IMR-90 (cell line): ENCODE measurements at regions of chr18 and their contacts with region 1.

Region 1: DNA sequence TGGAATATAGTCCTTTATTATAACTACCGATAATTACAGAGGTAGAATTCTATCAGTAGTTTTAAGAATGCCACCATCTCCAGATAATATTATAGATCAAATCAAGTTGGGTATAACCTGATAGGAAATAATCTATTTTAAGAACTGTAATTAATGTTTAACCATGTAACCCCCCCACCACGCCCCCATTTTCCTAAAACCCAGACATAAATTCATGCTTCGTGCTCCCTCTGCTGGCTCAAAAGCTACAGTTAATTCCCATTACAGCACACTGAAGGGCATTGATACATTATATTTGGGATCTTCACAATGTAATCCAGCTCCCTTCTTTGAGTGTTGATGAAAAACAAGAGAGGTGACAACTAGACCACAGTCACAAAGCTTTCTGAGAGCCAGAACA is 228.0 kb upstream of the SMAD7 start:
- DNase-seq: peak; percentile 23
- ATAC-seq: no peak
- H3K4me3 ChIP-seq: no peak overlapping the region
- H3K27ac ChIP-seq: no peak overlapping the region
- H3K4me1 ChIP-seq: peaks cover 5% of the 10 kb centered on the region; the same call in 1 of the 2 replicates
- H3K27me3 ChIP-seq: no peaks in the 10 kb centered on the region
- CTCF ChIP-seq: peak; percentile 56
- POLR2A ChIP-seq: no peak
- RAD21 ChIP-seq: peak; percentile 68

Region 2: DNA sequence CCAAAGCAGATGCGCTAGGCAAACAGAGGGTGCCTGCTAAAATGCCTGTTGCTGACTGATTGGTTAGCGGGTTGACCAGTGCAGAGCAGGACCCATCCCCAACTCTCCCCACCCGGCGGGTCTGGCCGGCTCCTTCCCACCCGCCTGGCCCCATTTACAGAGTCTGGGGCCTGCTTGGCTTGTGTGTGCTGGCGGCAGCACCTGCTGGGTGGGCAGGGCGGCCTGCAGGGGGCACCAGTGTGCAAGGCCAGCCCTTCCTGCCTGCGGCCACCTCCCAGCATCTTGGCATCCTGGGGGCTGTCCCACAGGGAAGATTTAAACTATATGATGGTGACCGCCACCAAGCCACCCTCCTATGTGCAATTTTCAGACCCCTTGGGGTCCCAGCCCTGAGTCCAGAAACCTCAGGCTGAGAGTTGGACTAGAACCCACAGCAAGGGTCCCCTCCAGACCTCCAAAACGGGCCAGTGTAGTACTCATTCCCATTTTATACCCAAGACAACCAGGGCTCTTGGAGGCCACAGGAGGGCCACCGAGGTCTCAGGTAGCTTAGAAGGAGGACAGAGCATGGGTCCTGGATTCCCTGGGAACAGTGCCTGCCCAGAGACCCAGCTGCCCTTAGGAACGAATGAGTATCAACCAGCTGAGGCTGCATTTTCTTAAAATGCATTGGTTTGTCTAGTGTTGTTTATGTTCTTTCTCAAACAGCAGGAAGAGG is 401.6 kb before region 1 on chr18:
- CTCF ChIA-PET with region 1: no interaction called
- POLR2A ChIA-PET with region 1: no interaction called
- dilution Hi-C with region 1: no loop called
- in situ Hi-C with region 1: no loop called
- intact Hi-C with region 1: loop called (anchors 2 kb)
- DNase-seq: peak; percentile 20
- ATAC-seq: peak; percentile 50
- H3K4me3 ChIP-seq: no peak overlapping the region
- H3K27ac ChIP-seq: no peak overlapping the region
- H3K4me1 ChIP-seq: peaks cover 39% of the 10 kb centered on the region
- H3K27me3 ChIP-seq: no peaks in the 10 kb centered on the region
- CTCF ChIP-seq: peak; percentile 72
- POLR2A ChIP-seq: no peak
- RAD21 ChIP-seq: peak; percentile 78

Region 3: GRCh38 chr18:49021433-49022129 is 157.2 kb before region 1 on chr18:
- CTCF ChIA-PET with region 1: interaction called, 3 read pairs
- POLR2A ChIA-PET with region 1: no interaction called
- dilution Hi-C with region 1: no loop called
- in situ Hi-C with region 1: no loop called
- intact Hi-C with region 1: loop called (anchors 1 kb)
- DNase-seq: peak; percentile 33
- ATAC-seq: peak; percentile 36
- H3K4me3 ChIP-seq: no peak overlapping the region
- H3K27ac ChIP-seq: no peak overlapping the region
- H3K4me1 ChIP-seq: peaks cover 10% of the 10 kb centered on the region
- H3K27me3 ChIP-seq: no peaks in the 10 kb centered on the region; the same call in 1 of the 2 replicates
- CTCF ChIP-seq: peak; percentile 53
- POLR2A ChIP-seq: no peak
- RAD21 ChIP-seq: peak; percentile 68

Region 4: DNA sequence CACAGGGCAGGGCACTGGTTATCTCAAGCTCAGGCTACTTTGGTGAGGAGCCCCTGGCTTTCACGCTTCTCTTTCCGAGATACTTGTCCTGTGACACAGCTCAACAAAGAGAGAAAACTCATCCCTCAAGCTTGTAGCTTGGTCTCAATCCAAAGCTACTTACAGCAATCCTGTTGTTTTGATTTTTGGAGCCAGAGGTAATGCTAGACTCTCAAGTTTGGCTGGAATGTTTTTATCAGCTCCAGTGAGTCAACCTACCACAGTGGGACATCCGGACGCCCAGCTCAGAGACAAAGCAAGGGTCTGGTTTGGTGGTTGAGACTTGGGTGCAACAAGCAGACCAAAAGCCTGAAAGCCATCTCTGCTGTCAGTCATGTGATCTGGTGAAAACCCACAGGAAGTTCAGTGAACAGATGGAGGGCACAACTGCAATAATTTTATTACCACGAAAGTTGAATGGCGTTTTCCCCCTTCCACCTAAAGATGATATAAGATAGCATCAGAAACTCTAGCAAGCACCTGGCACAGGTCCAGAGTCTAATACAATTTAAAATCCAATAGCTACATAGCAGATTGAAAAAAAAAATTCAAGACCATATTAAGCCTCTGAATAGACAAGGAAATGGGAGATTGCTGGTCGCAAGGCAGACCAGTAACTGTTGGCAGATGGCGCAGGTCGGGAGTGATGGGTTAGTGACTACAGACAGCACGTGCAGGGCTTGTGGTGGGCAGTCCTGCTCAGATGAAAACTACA is 125.7 kb before region 1 on chr18:
- CTCF ChIA-PET with region 1: no interaction called
- POLR2A ChIA-PET with region 1: no interaction called
- dilution Hi-C with region 1: no loop called
- in situ Hi-C with region 1: no loop called
- intact Hi-C with region 1: loop called (anchors 2 kb)
- DNase-seq: peak; percentile 97
- ATAC-seq: peak; percentile 71
- H3K4me3 ChIP-seq: no peak overlapping the region
- H3K27ac ChIP-seq: peak overlapping the region; percentile 85
- H3K4me1 ChIP-seq: peaks cover 38% of the 10 kb centered on the region
- H3K27me3 ChIP-seq: no peaks in the 10 kb centered on the region
- CTCF ChIP-seq: no peak
- POLR2A ChIP-seq: peak; percentile 26; the same call in 1 of the 2 replicates
- RAD21 ChIP-seq: no peak

Region 5: GRCh38 chr18:49094979-49095632 is 83.6 kb before region 1 on chr18:
- CTCF ChIA-PET with region 1: no interaction called
- POLR2A ChIA-PET with region 1: no interaction called
- dilution Hi-C with region 1: no loop called
- in situ Hi-C with region 1: no loop called
- intact Hi-C with region 1: loop called (anchors 5 kb)
- DNase-seq: peak; percentile 92
- ATAC-seq: peak; percentile 66
- H3K4me3 ChIP-seq: no peak overlapping the region
- H3K27ac ChIP-seq: no peak overlapping the region
- H3K4me1 ChIP-seq: peaks cover 6% of the 10 kb centered on the region
- H3K27me3 ChIP-seq: 0 out of 2 replicates have a peak, but pooled peaks cover 1% of the 10 kb centered on the region
- CTCF ChIP-seq: no peak
- POLR2A ChIP-seq: no peak
- RAD21 ChIP-seq: no peak